ENCODE measurements at regions of chr15 and their contacts with region 1.

Region 1: DNA sequence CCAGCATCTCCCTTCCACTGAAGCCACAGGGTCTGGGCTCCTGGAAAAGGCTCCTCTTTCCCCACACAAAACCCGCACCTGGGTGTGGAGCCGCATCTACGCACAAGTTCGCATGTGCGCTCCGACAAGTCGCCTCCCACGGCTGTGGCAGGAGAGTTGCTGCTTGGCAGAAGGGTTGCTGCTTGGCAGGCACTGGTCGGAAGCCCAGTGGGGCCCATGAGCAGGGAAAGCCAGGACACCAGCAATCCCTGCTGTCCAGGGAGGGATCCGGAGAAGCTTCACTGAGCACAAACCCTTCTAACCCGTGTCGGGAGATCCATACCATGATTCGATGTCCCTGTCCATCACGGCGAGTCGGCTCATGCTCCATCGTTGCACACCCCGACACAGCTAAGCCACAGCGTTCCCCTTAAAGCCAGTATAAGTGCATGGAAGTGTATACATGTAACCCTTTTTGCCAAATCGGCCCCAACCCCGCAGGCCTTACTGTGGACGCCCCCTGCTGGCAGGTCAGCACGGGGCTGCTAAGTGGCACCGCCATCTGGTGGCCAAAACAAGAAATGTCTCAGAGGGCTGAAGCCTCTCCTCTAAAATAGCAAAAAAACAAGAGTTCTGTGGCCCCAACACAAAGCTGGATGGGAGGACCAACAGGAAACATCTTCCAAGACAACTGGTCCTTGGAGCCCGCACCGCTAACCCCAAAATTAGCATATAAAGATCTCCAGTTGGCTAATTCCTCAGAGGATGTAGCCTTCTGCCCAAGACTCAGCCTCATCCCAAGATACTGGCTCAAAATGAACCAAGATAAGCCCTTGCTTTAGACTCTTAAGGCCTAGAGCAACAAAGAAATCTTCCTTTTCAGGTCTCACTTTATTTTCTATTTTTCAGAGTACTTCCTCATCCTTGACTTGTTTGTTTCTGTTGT is 8.3 kb downstream of the ANKRD63 start:
- DNase-seq: peak; percentile 88
- ATAC-seq: peak; percentile 35
- H3K4me3 Mint-ChIP-seq: no peak overlapping the region
- H3K27ac Mint-ChIP-seq: peak overlapping the region; percentile 79; the same call in 1 of the 2 replicates
- H3K4me1 Mint-ChIP-seq: peaks cover 25% of the 10 kb centered on the region
- H3K27me3 Mint-ChIP-seq: peaks cover 17% of the 10 kb centered on the region
- CTCF ChIP-seq: peak; percentile 100

Region 2: GRCh38 chr15:40054605-40055545 is 219.7 kb before region 1 on chr15:
- CTCF ChIA-PET with region 1: interaction called, 11 read pairs
- POLR2A ChIA-PET with region 1: no interaction called
- DNase-seq: no peak
- ATAC-seq: no peak
- H3K4me3 Mint-ChIP-seq: no peak overlapping the region
- H3K27ac Mint-ChIP-seq: peak overlapping the region; percentile 93
- H3K4me1 Mint-ChIP-seq: peaks cover 30% of the 10 kb centered on the region
- H3K27me3 Mint-ChIP-seq: no peaks in the 10 kb centered on the region
- CTCF ChIP-seq: no peak

Region 3: DNA sequence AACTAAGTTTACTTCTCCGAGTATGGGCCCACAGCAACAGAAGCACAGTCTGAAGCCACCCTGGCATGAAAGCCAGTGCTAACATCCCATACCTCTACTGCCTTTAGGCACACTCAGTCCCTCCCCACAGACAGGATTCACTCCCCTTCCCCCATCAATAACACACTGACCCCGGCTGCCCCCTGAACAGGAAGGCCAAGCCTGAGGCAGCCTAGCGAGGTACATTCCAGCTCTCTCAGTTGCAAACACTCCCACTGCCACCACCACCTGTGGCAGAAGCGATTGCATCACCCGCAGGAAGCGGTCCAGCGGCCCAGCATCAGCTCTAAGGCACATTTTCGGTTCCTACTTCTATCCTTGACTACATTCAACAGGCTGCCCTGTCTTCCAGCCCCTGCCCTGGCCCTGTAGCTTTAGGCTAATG is 158.9 kb before region 1 on chr15:
- CTCF ChIA-PET with region 1: interaction called, 12 read pairs
- POLR2A ChIA-PET with region 1: no interaction called
- DNase-seq: peak; percentile 63
- ATAC-seq: peak; percentile 84
- H3K4me3 Mint-ChIP-seq: no peak overlapping the region
- H3K27ac Mint-ChIP-seq: 0 out of 2 replicates have a peak overlapping the region, but pooled peaks have one; percentile 76
- H3K4me1 Mint-ChIP-seq: peaks cover 39% of the 10 kb centered on the region
- H3K27me3 Mint-ChIP-seq: no peaks in the 10 kb centered on the region
- CTCF ChIP-seq: no peak

Region 4: GRCh38 chr15:40244663-40245601 is 29.7 kb before region 1 on chr15:
- CTCF ChIA-PET with region 1: interaction called, 224 read pairs
- POLR2A ChIA-PET with region 1: interaction called, 3 read pairs
- DNase-seq: peak; percentile 19
- ATAC-seq: peak; percentile 36; the same call in 1 of the 2 replicates
- H3K4me3 Mint-ChIP-seq: no peak overlapping the region
- H3K27ac Mint-ChIP-seq: no peak overlapping the region
- H3K4me1 Mint-ChIP-seq: peaks cover 14% of the 10 kb centered on the region
- H3K27me3 Mint-ChIP-seq: peaks cover 2% of the 10 kb centered on the region; the same call in 1 of the 2 replicates
- CTCF ChIP-seq: no peak

Region 5: GRCh38 chr15:40307421-40308211 is 33.0 kb after region 1 on chr15 and contains the start of gene PLCB2:
- CTCF ChIA-PET with region 1: interaction called, 690 read pairs
- POLR2A ChIA-PET with region 1: interaction called, 12 read pairs
- DNase-seq: peak; percentile 44
- ATAC-seq: peak; percentile 55
- H3K4me3 Mint-ChIP-seq: peak within 1 kb of the TSS; percentile 22; the same call in 1 of the 2 replicates
- H3K27ac Mint-ChIP-seq: no peak within 1 kb of the TSS
- H3K4me1 Mint-ChIP-seq: peaks cover 35% of the 10 kb centered on the region
- H3K27me3 Mint-ChIP-seq: peaks cover 10% of the 10 kb centered on the region; the same call in 1 of the 2 replicates
- CTCF ChIP-seq: no peak
- total RNA-seq, gene PLCB2: 14.2 to 18.5 TPM (median 15.2 TPM) in 3 replicates

Region 6: GRCh38 chr15:40357723-40358470 is 83.3 kb after region 1 on chr15 and contains the start of gene DISP2:
- CTCF ChIA-PET with region 1: interaction called, 12 read pairs
- POLR2A ChIA-PET with region 1: no interaction called
- DNase-seq: peak; percentile 91
- ATAC-seq: peak; percentile 88
- H3K4me3 Mint-ChIP-seq: peak within 1 kb of the TSS; percentile 78
- H3K27ac Mint-ChIP-seq: no peak within 1 kb of the TSS
- H3K4me1 Mint-ChIP-seq: peaks cover 29% of the 10 kb centered on the region
- H3K27me3 Mint-ChIP-seq: peaks cover 34% of the 10 kb centered on the region
- CTCF ChIP-seq: no peak
- total RNA-seq, gene DISP2: 1.0 to 3.5 TPM (median 1.9 TPM) in 3 replicates

Measured in WTC11 (cell line).